ENCODE measurements at regions of chrX and their contacts with region 1.

Region 1: DNA sequence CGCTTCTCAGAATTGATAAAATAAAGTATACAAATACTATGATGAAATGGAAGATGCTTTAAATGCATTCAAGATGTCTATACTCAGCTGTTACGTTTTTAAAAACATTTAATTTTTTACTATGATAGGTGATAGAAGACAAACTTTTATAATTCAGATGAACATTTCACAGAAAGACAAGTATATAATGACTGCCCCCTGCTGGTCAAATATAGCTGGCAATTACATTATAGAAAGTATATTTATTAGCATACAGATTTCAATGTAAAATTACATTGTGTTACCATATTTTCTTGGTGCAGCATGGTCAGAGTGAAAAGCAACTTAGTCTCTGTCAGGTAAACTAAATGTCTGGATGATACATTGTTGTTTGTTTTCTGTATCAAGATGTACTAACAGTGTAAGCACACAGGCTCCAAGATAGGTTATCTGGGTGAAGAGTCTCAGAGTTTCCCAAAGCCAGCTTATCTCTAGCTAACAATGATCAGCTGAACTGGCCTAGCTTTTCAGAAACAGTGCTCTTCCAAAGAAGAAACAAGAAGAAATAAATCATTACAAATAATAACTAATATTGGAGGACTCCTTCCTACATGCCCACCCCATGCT is 54.1 kb downstream of the SRPX start:
- DNase-seq: peak; percentile 7
- H3K4me3 ChIP-seq: no peak overlapping the region
- H3K27ac ChIP-seq: no peak overlapping the region
- H3K4me1 ChIP-seq: no peaks in the 10 kb centered on the region
- H3K27me3 ChIP-seq: no peaks in the 10 kb centered on the region
- CTCF ChIP-seq: peak; percentile 92
- EP300 ChIP-seq: no peak
- RAD21 ChIP-seq: peak; percentile 45

Region 2: DNA sequence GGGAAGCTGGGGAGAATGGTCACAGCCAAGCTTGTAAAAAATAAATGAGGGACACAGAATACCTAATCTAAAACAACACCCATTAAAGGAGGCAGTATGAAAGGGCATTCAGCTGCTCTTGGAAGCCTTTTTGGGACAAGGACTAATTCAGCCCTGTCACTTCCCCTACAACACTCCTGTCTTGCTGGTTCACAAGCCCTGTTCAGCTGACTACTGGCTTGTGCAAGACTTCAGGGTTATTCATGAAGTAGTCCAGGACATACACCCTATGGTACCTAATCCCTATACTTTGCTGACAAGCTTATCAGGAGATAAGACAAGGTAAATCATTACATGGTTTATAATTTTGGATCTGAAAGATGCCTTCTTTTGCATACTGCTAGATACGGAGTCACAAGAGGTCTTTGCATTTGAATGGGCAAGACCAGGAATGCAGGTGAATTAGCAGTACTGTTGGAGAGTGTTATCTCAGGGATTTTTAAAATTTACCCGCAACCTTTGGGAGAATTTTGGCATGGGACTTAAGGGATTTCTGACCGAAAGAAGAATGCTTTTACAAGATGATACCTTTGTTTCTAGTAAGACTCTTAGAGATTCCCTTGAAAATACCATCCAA is 698.3 kb before region 1 on chrX:
- CTCF ChIA-PET with region 1: no interaction called
- POLR2A ChIA-PET with region 1: no interaction called
- DNase-seq: no peak
- H3K4me3 ChIP-seq: no peak overlapping the region
- H3K27ac ChIP-seq: no peak overlapping the region
- H3K4me1 ChIP-seq: no peaks in the 10 kb centered on the region
- H3K27me3 ChIP-seq: no peaks in the 10 kb centered on the region
- CTCF ChIP-seq: no peak
- EP300 ChIP-seq: no peak
- RAD21 ChIP-seq: no peak

Region 3: GRCh38 chrX:37638047-37638446 is 528.5 kb before region 1 on chrX:
- CTCF ChIA-PET with region 1: no interaction called
- POLR2A ChIA-PET with region 1: no interaction called
- DNase-seq: no peak
- H3K4me3 ChIP-seq: no peak overlapping the region
- H3K27ac ChIP-seq: no peak overlapping the region
- H3K4me1 ChIP-seq: no peaks in the 10 kb centered on the region
- H3K27me3 ChIP-seq: no peaks in the 10 kb centered on the region; the same call in 1 of the 2 replicates
- CTCF ChIP-seq: no peak
- EP300 ChIP-seq: no peak
- RAD21 ChIP-seq: no peak

Region 4: DNA sequence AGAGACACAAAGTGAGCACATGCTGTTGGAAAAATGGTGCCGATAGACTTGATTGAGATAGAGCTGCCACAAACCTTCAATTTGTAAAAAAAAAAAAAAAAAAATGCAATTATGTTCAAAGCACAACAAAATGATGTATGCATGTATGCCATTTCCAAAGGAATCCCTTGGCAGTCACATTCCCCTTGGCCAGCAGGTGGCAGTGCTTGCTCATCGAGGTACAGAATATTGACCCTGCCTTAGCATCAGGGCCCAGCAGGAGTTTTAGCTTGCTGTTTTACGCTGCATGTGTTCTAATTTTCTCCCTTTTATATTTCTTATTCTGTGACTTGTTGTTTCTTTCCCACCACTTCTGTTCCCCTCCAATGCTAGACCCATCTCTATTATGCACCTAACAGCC is 421.2 kb before region 1 on chrX:
- CTCF ChIA-PET with region 1: interaction called, 16 read pairs
- POLR2A ChIA-PET with region 1: no interaction called
- DNase-seq: peak; percentile 55
- H3K4me3 ChIP-seq: no peak overlapping the region; a peak in 1 of 4 replicates
- H3K27ac ChIP-seq: no peak overlapping the region
- H3K4me1 ChIP-seq: no peaks in the 10 kb centered on the region
- H3K27me3 ChIP-seq: no peaks in the 10 kb centered on the region; the same call in 1 of the 2 replicates
- CTCF ChIP-seq: peak; percentile 91
- EP300 ChIP-seq: no peak
- RAD21 ChIP-seq: peak; percentile 77

Region 5: DNA sequence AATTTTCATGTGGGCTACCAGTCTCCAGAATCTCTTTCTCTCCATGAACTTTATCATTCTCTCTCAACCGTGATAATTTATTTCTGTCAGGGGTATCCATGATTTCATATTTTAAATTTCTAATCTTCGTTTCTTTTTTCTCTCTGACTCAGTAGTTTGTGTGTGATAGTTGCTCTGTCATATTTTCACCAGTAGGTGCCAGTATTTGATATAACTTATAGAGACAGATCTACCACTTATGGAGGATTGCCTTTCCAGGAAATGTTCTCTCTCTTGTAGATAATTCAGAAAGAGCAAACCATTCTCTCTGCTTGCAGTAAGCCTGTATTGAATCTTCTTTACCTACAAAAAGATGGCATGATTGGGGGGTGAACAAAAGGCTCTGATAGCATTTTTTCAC is 239.9 kb before region 1 on chrX:
- CTCF ChIA-PET with region 1: interaction called, 17 read pairs
- POLR2A ChIA-PET with region 1: no interaction called
- DNase-seq: peak; percentile 8
- H3K4me3 ChIP-seq: no peak overlapping the region
- H3K27ac ChIP-seq: no peak overlapping the region
- H3K4me1 ChIP-seq: no peaks in the 10 kb centered on the region
- H3K27me3 ChIP-seq: no peaks in the 10 kb centered on the region
- CTCF ChIP-seq: peak; percentile 76
- EP300 ChIP-seq: no peak
- RAD21 ChIP-seq: peak; percentile 65

Region 6: GRCh38 chrX:38142610-38143009 is 24.0 kb before region 1 on chrX:
- CTCF ChIA-PET with region 1: interaction called, 12 read pairs
- POLR2A ChIA-PET with region 1: no interaction called
- DNase-seq: no peak
- H3K4me3 ChIP-seq: no peak overlapping the region
- H3K27ac ChIP-seq: no peak overlapping the region
- H3K4me1 ChIP-seq: no peaks in the 10 kb centered on the region
- H3K27me3 ChIP-seq: no peaks in the 10 kb centered on the region
- CTCF ChIP-seq: no peak
- EP300 ChIP-seq: no peak
- RAD21 ChIP-seq: no peak

Region 7: GRCh38 chrX:38181357-38181756 is 14.8 kb after region 1 on chrX:
- CTCF ChIA-PET with region 1: interaction called, 30 read pairs
- POLR2A ChIA-PET with region 1: no interaction called
- DNase-seq: no peak
- H3K4me3 ChIP-seq: no peak overlapping the region
- H3K27ac ChIP-seq: no peak overlapping the region
- H3K4me1 ChIP-seq: no peaks in the 10 kb centered on the region
- H3K27me3 ChIP-seq: no peaks in the 10 kb centered on the region
- CTCF ChIP-seq: no peak
- EP300 ChIP-seq: no peak
- RAD21 ChIP-seq: no peak

Region 8: DNA sequence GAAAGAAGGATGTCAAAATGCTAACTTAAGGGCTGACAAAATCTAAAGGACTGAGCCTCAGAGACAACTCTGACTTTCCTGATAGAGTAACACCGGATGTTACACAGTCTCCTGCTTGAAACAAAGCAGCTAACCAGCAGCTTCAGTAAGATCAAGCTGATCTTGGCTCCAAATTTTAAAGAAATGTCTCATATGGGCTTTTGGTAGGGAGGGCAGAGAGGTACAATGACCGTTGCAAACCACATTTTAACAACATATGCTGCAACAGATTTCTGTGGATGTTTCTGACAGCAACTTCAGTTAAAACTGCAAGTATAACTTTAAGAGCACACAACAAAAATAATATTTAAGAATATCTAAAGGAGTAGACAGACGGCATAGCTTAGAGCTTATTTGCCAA is 151.6 kb after region 1 on chrX:
- CTCF ChIA-PET with region 1: no interaction called
- POLR2A ChIA-PET with region 1: no interaction called
- DNase-seq: no peak
- H3K4me3 ChIP-seq: no peak overlapping the region
- H3K27ac ChIP-seq: no peak overlapping the region
- H3K4me1 ChIP-seq: peaks cover 0 to 1% of the 10 kb centered on the region in 2 experiments; a peak in 1 of 4 replicates
- H3K27me3 ChIP-seq: no peaks in the 10 kb centered on the region
- CTCF ChIP-seq: no peak
- EP300 ChIP-seq: no peak
- RAD21 ChIP-seq: no peak